Activated T-helper 1 cell treated with anti-CD3 and anti-CD28 coated beads, Interleukin-12 subunit alpha, Interleukin-12 subunit beta, Interleukin-2, Interleukin-4 antibody, amounts not matched to agents 30 ng/mL and 10 ng/mL and 1 ng/mL, durations not matched to agents 14 hours and 24 hours and 36 hours (primary cell): ENCODE measurements at regions of chr2 and their contacts with region 1.

Region 1: GRCh38 chr2:105682401-105682800 is 62.3 kb upstream of the NCK2 start:
- DNase-seq: no peak
- H3K4me3 Mint-ChIP-seq: no peak overlapping the region
- H3K27ac Mint-ChIP-seq: no peak overlapping the region
- H3K4me1 Mint-ChIP-seq: no peaks in the 10 kb centered on the region
- H3K27me3 Mint-ChIP-seq: no peaks in the 10 kb centered on the region

Region 2: DNA sequence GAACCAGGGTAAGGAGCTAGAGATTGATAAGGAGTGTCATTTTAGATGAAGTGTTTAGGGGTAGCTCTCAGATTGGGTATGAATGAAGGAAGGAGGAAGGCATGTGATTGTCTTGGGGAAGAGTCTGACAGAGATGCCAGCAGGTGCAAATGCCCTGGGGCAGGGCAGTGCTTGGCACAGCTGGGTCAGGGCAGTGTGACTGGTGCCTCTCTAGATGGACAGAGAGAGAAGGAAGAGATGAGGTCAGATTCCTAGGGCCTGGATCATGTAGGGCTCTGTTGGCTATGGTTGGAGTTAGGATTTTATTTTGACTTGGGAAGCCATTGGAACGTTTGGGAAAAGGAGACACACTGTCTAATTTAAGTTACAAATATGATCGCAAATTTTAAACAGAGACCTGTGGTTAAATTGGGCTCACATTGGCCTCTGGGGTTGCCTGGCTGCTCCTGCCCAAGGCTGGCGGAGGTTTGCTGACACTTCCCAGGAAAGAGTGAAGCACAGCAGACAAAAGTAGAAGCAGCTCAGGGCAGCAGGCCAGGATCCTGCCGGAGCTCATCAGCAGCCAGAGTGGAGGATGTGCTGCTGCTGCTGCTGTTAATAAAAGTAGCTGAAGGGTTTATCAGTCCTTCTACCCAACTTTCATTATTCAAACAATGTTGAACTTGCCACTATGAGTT is 250.9 kb before region 1 on chr2:
- intact Hi-C with region 1: no loop called
- DNase-seq: no peak
- H3K4me3 Mint-ChIP-seq: no peak overlapping the region
- H3K27ac Mint-ChIP-seq: no peak overlapping the region
- H3K4me1 Mint-ChIP-seq: peaks cover 9% of the 10 kb centered on the region
- H3K27me3 Mint-ChIP-seq: peaks cover 12% of the 10 kb centered on the region

Region 3: DNA sequence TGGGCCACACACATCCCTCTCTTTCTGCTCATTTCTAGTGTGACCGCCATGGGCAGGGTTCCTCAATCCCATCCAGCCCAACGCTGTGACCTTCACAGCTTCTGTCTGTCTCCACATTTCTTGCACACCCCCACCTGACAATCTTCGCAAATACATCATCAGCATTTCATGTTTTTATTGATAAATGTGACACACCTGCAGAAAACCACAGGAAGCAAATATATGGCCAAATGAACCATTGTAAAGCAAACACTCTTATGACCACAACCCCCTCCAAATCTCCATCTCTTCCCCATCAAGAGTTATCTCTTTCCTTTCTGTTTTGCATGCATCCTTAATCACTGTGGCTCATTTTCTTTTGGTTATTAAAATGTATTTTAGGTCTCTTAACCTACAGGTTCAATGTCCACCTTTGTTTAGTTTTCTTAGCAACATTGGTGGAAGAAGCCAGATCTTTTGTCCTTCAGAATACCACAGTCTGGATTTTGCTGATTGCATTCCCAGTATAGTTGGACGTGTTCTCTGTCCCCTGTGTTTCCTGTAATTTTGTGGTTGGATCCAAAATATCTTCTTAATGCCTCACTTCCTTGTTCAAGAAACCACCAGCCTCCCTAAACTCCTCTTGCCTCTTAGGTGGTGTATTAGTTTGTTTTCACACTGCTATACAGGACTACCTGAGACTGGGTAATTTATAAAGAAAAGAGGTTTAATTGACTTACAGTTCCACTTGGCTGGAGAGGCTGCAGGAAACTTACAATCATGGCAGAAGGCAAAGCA is 52.5 kb after region 1 on chr2:
- intact Hi-C with region 1: loop called (anchors 5 kb)
- DNase-seq: no peak
- H3K4me3 Mint-ChIP-seq: no peak overlapping the region
- H3K27ac Mint-ChIP-seq: no peak overlapping the region
- H3K4me1 Mint-ChIP-seq: peaks cover 42% of the 10 kb centered on the region
- H3K27me3 Mint-ChIP-seq: peaks cover 2% of the 10 kb centered on the region